Common myeloid progenitor, CD34-positive (primary cell): ENCODE measurements at regions of chr12 and their contacts with region 1.

Region 1: GRCh38 chr12:51368640-51369517 is 22.3 kb downstream of the GALNT6 start:
- DNase-seq: peak; percentile 100
- H3K4me3 ChIP-seq: peak overlapping the region in 4 of 7 experiments; percentile 3 to 60 (median 44)
- H3K27ac ChIP-seq: peak overlapping the region; percentile 8 to 15
- H3K4me1 ChIP-seq: peaks cover 13 to 51% (median 36%) of the 10 kb centered on the region in 4 experiments
- H3K27me3 ChIP-seq: no peaks in the 10 kb centered on the region

Region 2: GRCh38 chr12:51281202-51281924 is 87.5 kb before region 1 on chr12:
- CTCF ChIA-PET with region 1: no interaction called
- POLR2A ChIA-PET with region 1: no interaction called
- DNase-seq: no peak
- H3K4me3 ChIP-seq: no peak overlapping the region
- H3K27ac ChIP-seq: no peak overlapping the region
- H3K4me1 ChIP-seq: no peaks in the 10 kb centered on the region
- H3K27me3 ChIP-seq: no peaks in the 10 kb centered on the region

Region 3: GRCh38 chr12:51381226-51382079 is 12.6 kb after region 1 on chr12:
- CTCF ChIA-PET with region 1: interaction called, 27 read pairs
- POLR2A ChIA-PET with region 1: interaction called, 11 read pairs
- DNase-seq: no peak
- H3K4me3 ChIP-seq: no peak overlapping the region
- H3K27ac ChIP-seq: no peak overlapping the region
- H3K4me1 ChIP-seq: peaks cover 4 to 46% (median 31%) of the 10 kb centered on the region in 4 experiments
- H3K27me3 ChIP-seq: no peaks in the 10 kb centered on the region

Region 4: DNA sequence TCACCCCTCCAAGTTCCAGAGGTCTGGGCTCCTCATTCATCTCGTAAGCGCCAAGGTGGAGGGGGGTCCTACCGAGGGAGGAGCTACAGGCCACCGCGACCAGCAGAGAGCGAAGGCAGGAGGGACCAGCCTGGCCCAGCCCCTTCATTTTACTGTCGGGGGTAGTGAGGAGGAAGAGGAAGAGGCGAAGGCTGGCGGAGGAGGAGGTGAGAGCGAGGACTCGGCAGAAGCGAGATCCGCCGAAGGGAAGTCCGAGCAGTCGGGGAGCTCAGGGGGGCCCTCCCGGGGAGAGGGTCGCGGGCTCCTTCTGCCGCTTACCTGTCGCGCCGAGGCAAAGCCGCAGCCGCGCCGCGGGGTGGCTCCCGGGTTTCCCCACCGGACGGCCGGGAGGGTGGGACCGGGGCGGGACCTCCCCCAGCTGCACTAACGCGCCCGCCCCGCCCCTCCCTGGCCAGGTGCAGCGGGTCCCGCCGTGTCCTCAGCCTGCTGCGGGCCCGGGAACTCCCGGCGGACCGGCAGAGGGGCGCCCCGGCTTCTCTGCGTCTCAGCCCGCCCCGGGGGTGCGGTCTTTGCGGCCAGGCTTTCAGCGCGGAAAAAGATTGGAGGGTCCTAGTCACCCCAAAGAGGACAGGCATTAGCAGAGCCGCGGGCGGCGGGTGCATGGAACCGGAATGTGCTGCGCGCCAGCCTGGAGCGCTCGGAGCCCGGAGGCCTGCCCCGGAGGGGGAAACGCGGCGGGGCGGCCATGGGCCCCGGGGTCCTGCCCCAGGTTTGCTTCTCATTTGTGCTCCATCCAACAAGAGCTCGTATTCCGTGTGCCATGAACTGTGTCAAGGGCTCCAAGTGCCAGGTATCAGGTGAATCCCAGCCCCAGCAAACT is 22.6 kb after region 1 on chr12 and contains the start of gene GALNT6:
- CTCF ChIA-PET with region 1: interaction called, 7 read pairs
- POLR2A ChIA-PET with region 1: interaction called, 49 read pairs
- DNase-seq: peak; percentile 46 to 70 (median 56)
- H3K4me3 ChIP-seq: peak within 1 kb of the TSS; percentile 48 to 89 (median 77)
- H3K27ac ChIP-seq: peak within 1 kb of the TSS; percentile 54 to 73
- H3K4me1 ChIP-seq: peaks cover 21 to 85% (median 76%) of the 10 kb centered on the region in 4 experiments
- H3K27me3 ChIP-seq: no peaks in the 10 kb centered on the region

Region 5: DNA sequence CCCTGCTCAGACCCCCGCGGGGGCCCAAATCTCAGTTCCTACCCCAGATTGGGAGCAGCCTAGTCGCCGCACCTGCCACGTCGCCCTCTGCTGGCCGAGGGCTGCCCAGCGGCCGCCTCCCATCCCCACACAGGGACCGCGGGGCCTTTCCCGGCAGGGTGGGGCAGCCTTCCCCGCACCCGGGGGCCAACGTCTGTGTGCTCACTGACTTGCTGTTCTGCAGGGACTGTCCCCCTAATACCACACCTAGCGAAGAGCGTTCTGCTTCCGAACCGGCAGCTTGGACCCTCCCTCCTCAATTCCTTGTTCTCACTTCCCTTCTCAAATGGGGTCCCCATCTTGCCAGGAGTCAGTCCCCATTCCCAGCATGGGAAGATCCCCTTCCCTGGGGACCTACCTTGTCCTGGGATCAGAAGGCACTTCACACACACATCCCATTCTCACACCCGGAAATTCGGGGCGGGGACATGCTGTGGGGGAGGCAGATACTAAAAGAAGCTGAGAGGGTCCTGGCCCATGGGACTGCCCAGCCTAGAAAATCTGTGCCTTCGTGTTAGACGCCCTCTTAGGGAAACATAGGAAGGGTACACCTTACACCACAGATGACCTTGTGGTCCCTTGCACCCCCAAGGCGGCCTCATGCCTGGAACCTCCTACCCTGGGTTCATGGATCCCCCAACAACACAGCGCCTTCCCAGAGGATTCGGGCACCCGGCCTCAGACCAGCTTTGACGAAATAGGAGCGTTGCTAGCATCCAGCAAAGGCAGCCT is 554.8 kb after region 1 on chr12:
- CTCF ChIA-PET with region 1: no interaction called
- POLR2A ChIA-PET with region 1: no interaction called
- DNase-seq: peak; percentile 20 to 45 (median 42)
- H3K4me3 ChIP-seq: peak overlapping the region in 3 of 7 experiments; percentile 26 to 58 (median 42)
- H3K27ac ChIP-seq: no peak overlapping the region
- H3K4me1 ChIP-seq: peaks cover 10 to 29% (median 29%) of the 10 kb centered on the region in 4 experiments
- H3K27me3 ChIP-seq: no peaks in the 10 kb centered on the region